IMR-90 (cell line): ENCODE measurements at regions of chr1 and their contacts with region 1.

Region 1: GRCh38 chr1:206635080-206635977 is at the start of gene DYRK3:
- DNase-seq: peak; percentile 92
- ATAC-seq: peak; percentile 88
- H3K4me3 ChIP-seq: peak within 1 kb of the TSS; percentile 94
- H3K27ac ChIP-seq: peak within 1 kb of the TSS; percentile 69
- H3K4me1 ChIP-seq: peaks cover 8% of the 10 kb centered on the region
- H3K27me3 ChIP-seq: no peaks in the 10 kb centered on the region
- CTCF ChIP-seq: peak; percentile 8; the same call in 1 of the 2 replicates
- POLR2A ChIP-seq: peak; percentile 96
- RAD21 ChIP-seq: no peak
- total RNA-seq, gene DYRK3: 21.1 and 22.0 TPM in 2 replicates

Region 2: DNA sequence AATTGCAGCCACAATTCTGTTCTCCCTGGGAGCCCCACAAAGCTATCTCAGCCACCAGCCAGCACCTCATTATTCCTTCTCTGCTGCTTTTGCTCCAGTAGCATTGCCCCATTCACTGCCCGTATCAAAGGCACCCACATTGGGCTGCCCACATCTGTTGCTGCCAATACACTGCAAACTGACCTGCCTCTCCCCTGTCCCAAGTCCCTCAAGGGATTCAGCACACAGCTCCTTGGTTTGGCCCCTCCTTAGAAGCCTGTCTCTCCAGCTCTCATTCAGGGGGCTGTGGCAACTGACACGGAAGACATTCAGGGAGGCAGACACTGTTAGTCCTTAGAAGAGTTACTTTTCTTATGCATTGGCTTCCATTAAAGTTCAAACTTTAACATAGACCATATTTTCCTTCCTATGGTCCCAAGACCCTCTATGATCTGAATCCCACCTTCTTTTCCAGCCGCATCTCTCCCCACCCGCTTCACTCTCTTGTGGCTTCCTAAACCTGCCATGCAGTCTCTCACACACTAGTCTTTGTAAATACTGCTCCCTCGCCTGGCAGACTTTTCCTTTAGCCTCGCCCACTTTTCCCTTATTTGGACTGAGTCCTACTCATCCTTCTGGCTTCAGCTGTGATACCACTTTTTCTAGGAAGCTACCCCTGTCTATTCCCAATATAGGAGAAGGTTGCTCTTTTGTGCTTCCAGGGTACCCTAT is 1259.3 kb before region 1 on chr1:
- CTCF ChIA-PET with region 1: no interaction called
- POLR2A ChIA-PET with region 1: no interaction called
- dilution Hi-C with region 1: no loop called
- in situ Hi-C with region 1: no loop called
- intact Hi-C with region 1: no loop called
- DNase-seq: peak; percentile 68
- ATAC-seq: peak; percentile 72
- H3K4me3 ChIP-seq: no peak overlapping the region
- H3K27ac ChIP-seq: no peak overlapping the region
- H3K4me1 ChIP-seq: peaks cover 21% of the 10 kb centered on the region
- H3K27me3 ChIP-seq: peaks cover 17% of the 10 kb centered on the region
- CTCF ChIP-seq: peak; percentile 20; the same call in 1 of the 2 replicates
- POLR2A ChIP-seq: no peak
- RAD21 ChIP-seq: no peak

Region 3: DNA sequence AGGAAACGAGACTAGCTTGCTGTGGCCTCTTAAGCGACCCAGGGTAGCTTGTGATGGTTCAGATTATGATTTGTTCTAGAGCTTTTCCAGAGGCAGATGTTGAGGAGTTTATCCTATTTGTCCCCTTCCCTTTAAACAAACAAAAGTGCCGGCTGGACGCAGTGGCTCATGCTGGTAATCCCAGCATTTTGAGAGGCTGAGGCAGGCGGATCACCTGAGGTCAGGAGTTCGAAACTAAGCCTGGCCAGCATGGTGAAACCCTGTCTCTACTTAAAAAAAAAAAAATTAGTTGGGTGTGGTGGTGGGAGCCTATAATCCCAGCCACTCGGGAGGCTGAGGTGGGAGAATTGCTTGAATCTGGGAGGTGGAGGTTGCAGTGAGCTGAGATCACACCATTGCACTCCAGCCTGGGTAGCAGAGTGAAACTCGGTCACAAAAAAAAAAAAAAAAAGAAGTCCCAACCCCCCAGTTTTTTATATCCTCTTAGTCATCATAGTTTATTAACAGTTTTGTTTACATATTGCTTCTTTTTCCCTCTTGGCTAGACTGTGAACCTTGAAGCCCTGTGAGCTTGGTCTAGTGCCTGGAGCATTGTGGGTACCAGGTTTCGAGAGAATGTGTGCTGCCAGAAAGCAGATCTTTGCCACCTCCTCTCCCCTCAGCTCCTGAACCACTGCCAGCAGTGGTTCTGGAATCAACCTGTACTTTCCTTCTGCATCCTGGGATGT is 79.2 kb after region 1 on chr1:
- CTCF ChIA-PET with region 1: interaction called, 3 read pairs
- POLR2A ChIA-PET with region 1: no interaction called
- dilution Hi-C with region 1: no loop called
- in situ Hi-C with region 1: no loop called
- intact Hi-C with region 1: loop called (anchors 2 kb)
- DNase-seq: peak; percentile 82
- ATAC-seq: peak; percentile 70
- H3K4me3 ChIP-seq: no peak overlapping the region
- H3K27ac ChIP-seq: 0 out of 2 replicates have a peak overlapping the region, but pooled peaks have one; percentile 10
- H3K4me1 ChIP-seq: peaks cover 30% of the 10 kb centered on the region
- H3K27me3 ChIP-seq: no peaks in the 10 kb centered on the region
- CTCF ChIP-seq: no peak
- POLR2A ChIP-seq: no peak
- RAD21 ChIP-seq: no peak

Region 4: GRCh38 chr1:206808615-206809014 is 173.3 kb after region 1 on chr1:
- CTCF ChIA-PET with region 1: interaction called, 5 read pairs
- POLR2A ChIA-PET with region 1: no interaction called
- dilution Hi-C with region 1: no loop called
- in situ Hi-C with region 1: no loop called
- intact Hi-C with region 1: loop called (anchors 1 kb)
- DNase-seq: peak; percentile 57
- ATAC-seq: peak; percentile 54; the same call in 1 of the 2 replicates
- H3K4me3 ChIP-seq: no peak overlapping the region
- H3K27ac ChIP-seq: no peak overlapping the region
- H3K4me1 ChIP-seq: no peaks in the 10 kb centered on the region
- H3K27me3 ChIP-seq: peaks cover 5% of the 10 kb centered on the region; the same call in 1 of the 2 replicates
- CTCF ChIP-seq: peak; percentile 62
- POLR2A ChIP-seq: no peak
- RAD21 ChIP-seq: peak; percentile 82